Activated CD4-positive, alpha-beta memory T cell treated with anti-CD3 and anti-CD28 coated beads, Interleukin-2, amount 10 ng/mL, durations not matched to agents 7 days and 5 days (primary cell): ENCODE measurements at regions of chr1 and their contacts with region 1.

Region 1: DNA sequence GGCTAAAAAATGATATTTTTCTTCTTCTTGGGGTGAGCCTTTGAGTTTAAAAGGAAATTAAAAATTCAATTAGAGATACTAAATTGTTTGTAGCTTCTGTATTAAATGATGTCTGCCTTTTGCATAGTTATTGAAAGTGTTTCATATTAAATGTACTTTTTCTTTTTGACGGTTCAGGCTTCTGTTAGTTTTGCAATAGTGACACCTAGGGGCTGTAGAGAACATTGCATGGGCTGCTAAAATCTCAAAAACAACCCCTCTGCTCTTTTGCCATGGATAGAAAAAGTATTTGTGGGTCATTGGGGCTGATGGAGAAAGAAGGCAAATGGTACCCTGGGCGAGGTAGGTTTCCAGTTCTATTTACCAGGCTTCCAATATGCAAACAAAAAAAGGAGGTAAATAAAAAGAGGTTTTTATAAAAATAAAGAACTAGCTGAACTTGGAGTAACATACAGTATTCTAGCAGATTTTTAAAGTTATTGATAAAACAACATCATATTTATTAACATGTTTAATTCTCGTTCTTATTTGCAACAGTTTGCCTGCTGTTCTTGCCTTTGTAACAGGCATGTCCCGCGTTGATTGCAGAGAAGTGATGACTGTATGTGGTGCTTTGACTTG is 115.4 kb upstream of the HOOK1 start:
- DNase-seq: no peak
- H3K4me3 Mint-ChIP-seq: no peak overlapping the region
- H3K27ac Mint-ChIP-seq: no peak overlapping the region
- H3K4me1 Mint-ChIP-seq: peaks cover 26% of the 10 kb centered on the region
- H3K27me3 Mint-ChIP-seq: no peaks in the 10 kb centered on the region

Region 2: DNA sequence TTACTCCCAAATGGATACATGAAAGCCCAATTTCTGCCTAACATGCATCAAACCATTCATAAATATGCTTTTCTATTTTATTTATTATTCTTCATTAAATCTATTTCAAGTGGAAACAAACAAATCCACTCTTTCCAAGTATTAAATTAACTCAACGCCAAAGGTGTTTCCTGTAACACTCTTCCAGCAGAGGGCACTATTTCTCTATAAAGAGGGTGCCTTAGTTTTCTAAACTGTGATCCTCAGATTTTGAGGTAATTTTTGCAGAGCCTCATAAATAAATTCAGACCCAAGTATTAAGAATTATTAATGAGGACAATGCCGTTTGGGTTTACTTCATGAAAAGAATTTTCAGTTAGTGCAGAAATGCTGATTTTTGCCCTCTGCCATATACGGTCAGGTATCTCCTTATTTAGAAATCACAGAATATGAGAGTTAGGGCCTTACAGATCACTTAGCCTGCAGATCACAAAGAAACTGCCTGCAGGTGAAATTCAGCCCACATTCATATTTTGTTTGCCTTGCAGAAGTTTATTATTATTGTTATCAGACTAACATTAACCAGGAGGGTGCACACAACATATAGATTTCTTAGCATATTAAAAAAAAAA is 959.4 kb before region 1 on chr1:
- CTCF ChIA-PET with region 1: interaction called, 11 read pairs
- POLR2A ChIA-PET with region 1: no interaction called
- DNase-seq: no peak
- H3K4me3 Mint-ChIP-seq: no peak overlapping the region
- H3K27ac Mint-ChIP-seq: no peak overlapping the region
- H3K4me1 Mint-ChIP-seq: peaks cover 10% of the 10 kb centered on the region
- H3K27me3 Mint-ChIP-seq: peaks cover 14% of the 10 kb centered on the region

Region 3: DNA sequence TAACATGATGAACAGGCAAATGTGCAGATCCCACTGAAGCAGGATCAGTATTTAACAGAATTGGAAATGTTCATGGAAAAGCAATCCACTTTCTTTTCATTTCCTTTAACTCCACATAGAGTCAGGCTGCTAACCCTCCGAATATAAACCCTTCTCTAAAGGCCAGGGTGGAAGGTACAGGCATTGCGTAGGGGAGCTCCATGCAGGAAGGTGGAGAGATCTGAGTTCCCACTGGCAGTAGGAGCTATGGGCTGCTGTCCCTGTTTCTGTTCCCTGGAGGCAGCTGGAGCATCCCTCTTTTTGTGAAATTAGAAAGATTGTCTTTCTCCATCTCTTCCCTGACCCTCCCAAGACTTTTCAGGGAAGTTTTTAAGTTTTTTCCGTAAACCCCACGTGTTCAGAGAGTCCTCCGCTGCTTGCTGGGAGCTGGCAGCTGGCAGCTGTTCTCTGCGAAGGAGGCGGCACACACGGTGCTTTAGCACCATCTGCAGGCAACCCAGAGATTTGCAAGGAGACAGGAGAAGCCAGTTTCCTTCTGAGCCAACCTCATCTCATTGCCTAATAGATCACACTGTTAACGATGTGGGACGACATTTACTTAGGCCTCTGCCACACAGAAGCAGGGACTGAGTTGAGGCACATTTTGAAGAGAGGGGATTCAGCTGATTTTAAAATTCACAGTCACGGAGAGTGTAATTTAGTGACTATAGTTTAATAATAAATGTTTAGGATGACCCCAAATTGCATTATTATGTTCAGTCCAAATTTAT is 60.0 kb after region 1 on chr1:
- CTCF ChIA-PET with region 1: interaction called, 23 read pairs
- POLR2A ChIA-PET with region 1: no interaction called
- DNase-seq: peak; percentile 73
- H3K4me3 Mint-ChIP-seq: no peak overlapping the region
- H3K27ac Mint-ChIP-seq: no peak overlapping the region
- H3K4me1 Mint-ChIP-seq: peaks cover 2% of the 10 kb centered on the region
- H3K27me3 Mint-ChIP-seq: no peaks in the 10 kb centered on the region